Activated B cell treated with CpG ODN at 0.5 μM for 24 hours (primary cell): ENCODE measurements at regions of chr17 and their contacts with region 1.

Region 1: GRCh38 chr17:78140169-78140976 is 5.8 kb upstream of the C17orf99 start:
- DNase-seq: peak; percentile 95
- ATAC-seq: peak; percentile 91
- H3K4me3 Mint-ChIP-seq: peak overlapping the region; percentile 58
- H3K27ac Mint-ChIP-seq: peak overlapping the region; percentile 80
- H3K4me1 Mint-ChIP-seq: peaks cover 90% of the 10 kb centered on the region
- H3K27me3 Mint-ChIP-seq: no peaks in the 10 kb centered on the region
- CTCF ChIP-seq: no peak

Region 2: DNA sequence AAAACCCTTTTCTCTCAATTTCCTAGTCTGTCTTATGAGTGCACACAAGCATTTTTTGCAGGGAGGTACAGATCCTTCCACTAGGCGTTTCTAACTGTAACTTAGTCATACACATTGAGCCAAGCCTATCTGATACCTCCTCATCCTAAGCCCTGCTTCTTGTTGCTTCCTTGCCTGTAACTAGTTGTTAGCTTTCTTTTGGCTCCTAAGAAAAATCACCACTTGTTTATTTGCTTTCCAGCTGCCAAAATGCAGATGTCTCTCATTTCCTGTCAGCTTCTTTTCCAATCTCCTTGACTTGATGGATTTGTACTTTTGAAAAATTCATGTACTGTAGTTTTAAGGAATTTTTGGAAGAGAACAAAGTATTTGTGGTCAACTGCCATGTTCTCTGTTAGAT is 108.2 kb before region 1 on chr17:
- CTCF ChIA-PET with region 1: no interaction called
- POLR2A ChIA-PET with region 1: no interaction called
- intact Hi-C with region 1: no loop called
- DNase-seq: no peak
- ATAC-seq: no peak
- H3K4me3 Mint-ChIP-seq: no peak overlapping the region
- H3K27ac Mint-ChIP-seq: no peak overlapping the region
- H3K4me1 Mint-ChIP-seq: no peaks in the 10 kb centered on the region
- H3K27me3 Mint-ChIP-seq: no peaks in the 10 kb centered on the region
- CTCF ChIP-seq: no peak

Region 3: DNA sequence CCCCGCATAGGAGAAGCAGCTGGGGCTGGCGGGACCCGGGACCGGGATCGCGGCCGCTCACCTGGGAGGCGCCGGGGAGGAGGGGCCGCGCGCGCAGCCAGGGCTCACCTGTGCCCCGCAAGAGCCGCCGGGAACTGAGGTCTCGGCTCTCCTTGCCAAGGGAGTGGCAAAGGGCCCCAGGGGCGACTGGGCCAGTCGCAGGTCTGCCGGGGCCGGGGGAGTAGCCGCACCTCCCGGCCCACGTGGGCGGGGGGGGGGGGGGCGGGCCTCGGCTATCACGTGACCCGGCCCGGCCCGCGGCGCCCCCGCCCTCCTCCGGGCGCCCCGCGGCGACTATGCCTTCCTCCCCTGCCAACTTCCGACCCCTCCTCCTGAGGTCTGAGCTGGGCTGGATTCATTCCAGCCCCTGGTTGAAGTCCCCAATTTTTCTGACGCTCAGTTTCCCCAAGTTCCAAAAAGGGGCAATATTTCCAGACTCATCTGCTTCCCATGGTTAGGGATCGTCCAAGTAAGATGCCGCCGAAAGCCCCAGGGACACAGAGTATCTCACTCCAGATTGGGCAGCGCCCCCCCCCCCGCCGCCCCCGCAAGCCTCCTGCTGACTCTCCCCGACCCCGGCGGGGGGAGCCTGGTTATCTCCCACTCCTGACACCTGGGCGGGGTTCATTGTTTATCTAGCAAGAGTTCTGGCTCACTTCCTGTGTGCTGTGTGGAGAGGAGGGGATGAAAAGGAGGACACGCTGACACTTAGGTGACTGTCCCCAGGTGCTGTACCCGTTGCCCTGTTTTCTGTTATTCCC is 11.6 kb before region 1 on chr17 and contains the start of gene TMC6:
- CTCF ChIA-PET with region 1: interaction called, 14 read pairs
- POLR2A ChIA-PET with region 1: interaction called, 1,040 read pairs
- intact Hi-C with region 1: loop called (anchors 1 kb)
- DNase-seq: peak; percentile 66
- ATAC-seq: peak; percentile 17
- H3K4me3 Mint-ChIP-seq: peak within 1 kb of the TSS; percentile 92
- H3K27ac Mint-ChIP-seq: peak within 1 kb of the TSS; percentile 93
- H3K4me1 Mint-ChIP-seq: peaks cover 74% of the 10 kb centered on the region
- H3K27me3 Mint-ChIP-seq: no peaks in the 10 kb centered on the region
- CTCF ChIP-seq: no peak
- total RNA-seq, gene TMC6: 746 and 896 TPM in 2 replicates

Region 4: DNA sequence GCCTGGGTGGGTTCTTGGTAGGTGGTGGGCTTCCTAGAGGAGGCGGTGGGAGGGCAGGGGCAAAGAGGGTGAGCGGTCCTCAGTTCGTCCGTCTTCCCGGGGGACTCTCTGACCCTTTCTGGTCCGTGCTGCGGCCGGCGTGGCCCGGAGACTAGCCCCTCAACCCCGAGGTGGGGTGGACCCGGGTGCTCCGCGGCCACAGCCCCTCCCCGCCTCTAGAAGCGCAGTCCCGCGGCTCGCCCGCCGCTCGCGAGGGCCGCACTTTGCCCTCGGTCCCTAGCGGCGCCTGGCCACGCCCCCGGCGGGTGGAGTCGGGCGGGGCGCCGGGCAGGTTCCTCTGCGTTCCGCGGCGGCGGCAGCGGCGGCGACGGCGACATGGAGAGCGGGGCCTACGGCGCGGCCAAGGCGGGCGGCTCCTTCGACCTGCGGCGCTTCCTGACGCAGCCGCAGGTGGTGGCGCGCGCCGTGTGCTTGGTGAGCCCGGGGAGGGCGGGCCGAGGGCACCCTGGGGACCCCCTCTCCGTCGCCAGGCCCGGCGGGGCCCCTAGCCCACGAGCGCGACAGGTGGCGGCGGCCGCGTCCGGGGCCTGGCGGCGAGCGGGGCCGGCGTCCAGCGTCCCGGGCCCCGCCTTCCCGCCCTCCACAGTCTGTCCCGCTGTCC is 28.0 kb after region 1 on chr17 and contains the start of gene SYNGR2:
- CTCF ChIA-PET with region 1: interaction called, 220 read pairs
- POLR2A ChIA-PET with region 1: interaction called, 2,404 read pairs
- intact Hi-C with region 1: loop called (anchors 1 kb)
- DNase-seq: peak; percentile 92
- ATAC-seq: peak; percentile 75
- H3K4me3 Mint-ChIP-seq: peak within 1 kb of the TSS; percentile 84
- H3K27ac Mint-ChIP-seq: peak within 1 kb of the TSS; percentile 90
- H3K4me1 Mint-ChIP-seq: peaks cover 52% of the 10 kb centered on the region
- H3K27me3 Mint-ChIP-seq: no peaks in the 10 kb centered on the region
- CTCF ChIP-seq: no peak
- total RNA-seq, gene SYNGR2: 636 and 647 TPM in 2 replicates

Region 5: GRCh38 chr17:78186692-78187595 is 46.6 kb after region 1 on chr17 and contains the starts of genes AFMID and TK1:
- CTCF ChIA-PET with region 1: interaction called, 4 read pairs
- POLR2A ChIA-PET with region 1: interaction called, 2,404 read pairs
- intact Hi-C with region 1: no loop called
- DNase-seq: peak; percentile 83
- ATAC-seq: peak; percentile 96
- H3K4me3 Mint-ChIP-seq: peak within 1 kb of the TSS; percentile 85
- H3K27ac Mint-ChIP-seq: peak within 1 kb of the TSS; percentile 54
- H3K4me1 Mint-ChIP-seq: peaks cover 18% of the 10 kb centered on the region
- H3K27me3 Mint-ChIP-seq: no peaks in the 10 kb centered on the region
- CTCF ChIP-seq: no peak
- total RNA-seq, gene AFMID: 11.2 and 15.4 TPM in 2 replicates
- total RNA-seq, gene TK1: 3.8 TPM in 2 replicates